ENCODE measurements at regions of chr3 and their contacts with region 1.

Region 1: DNA sequence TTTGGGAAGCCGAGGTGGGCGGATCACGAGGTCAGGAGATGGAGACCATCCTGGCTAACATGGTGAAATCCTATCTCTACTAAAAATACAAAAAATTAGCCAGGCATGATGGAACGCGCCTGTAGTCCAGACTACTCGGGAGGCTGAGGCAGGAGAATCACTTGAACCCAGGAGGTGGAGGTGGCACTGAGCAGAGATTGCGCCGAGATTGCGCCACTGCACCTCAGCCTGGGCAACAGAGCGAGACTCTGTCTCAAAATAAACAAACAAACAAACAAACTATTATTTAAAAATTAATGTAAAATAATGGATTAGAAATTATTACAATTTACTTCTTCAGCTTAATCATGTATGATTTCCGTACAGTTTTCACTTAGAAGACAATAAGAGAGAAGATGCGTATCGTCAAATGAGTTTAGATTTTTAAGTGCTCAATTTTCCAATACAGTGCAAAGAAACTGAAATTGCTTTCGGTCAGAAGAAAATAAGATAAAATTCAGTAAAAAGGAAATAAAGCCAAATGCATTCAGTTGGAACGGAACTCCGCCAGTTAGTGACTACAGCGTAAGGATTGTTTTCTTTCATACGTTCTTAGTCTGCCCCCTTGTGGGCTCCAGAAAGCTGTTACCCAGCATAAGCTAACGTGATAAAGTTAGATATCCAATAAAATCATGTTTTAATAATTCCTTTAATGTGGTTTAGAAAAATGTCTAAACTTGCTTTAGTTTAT is 24.8 kb downstream of the AADAC start:
- DNase-seq: peak; percentile 78
- H3K4me3 Mint-ChIP-seq: no peak overlapping the region
- H3K27ac Mint-ChIP-seq: no peak overlapping the region
- H3K4me1 Mint-ChIP-seq: peaks cover 26% of the 10 kb centered on the region
- H3K27me3 Mint-ChIP-seq: no peaks in the 10 kb centered on the region
- CTCF ChIP-seq: peak; percentile 73

Region 2: DNA sequence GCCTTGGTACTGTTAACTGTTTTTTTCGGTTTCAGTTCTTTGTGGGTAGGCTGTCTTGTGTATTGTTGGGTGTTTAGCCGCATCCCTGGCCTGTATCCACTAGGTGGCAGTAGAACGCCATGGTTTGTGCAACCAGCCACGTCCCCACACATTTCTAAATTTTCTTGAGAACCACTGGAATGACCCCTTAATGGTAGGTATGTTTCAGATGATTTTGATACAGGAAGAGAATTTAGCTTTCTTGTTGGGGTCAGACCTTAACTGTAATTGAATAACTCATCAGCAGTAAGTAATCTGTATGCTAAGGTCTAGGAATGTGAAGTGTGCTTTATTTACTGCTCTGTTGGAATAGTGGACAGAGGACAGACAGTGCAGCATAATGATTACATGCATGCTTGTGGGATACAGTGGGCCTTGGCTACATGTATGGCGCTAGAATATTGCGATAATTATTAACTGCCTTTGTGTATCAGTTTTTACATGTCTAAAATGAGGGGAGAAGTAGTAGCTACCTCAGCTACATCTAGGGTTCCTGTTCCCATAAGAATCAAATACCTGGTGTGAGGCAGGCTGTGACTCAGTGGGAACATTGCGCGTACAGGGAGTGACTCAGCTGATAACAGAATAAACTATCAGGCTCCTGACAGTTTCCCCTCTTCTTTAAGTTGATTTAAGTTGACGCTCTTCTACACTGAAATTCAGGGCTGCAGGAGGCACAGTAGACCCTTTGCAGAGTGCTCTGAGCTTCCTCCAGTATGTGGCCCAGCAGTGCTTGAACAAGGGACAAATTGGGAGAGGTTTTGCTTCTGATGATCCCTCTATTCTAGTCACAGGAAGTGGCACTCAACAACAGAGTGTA is 610.7 kb before region 1 on chr3:
- CTCF ChIA-PET with region 1: no interaction called
- intact Hi-C with region 1: loop called (anchors 5 kb)
- DNase-seq: peak; percentile 85
- H3K4me3 Mint-ChIP-seq: peak overlapping the region; percentile 31
- H3K27ac Mint-ChIP-seq: peak overlapping the region; percentile 7
- H3K4me1 Mint-ChIP-seq: peaks cover 23% of the 10 kb centered on the region
- H3K27me3 Mint-ChIP-seq: no peaks in the 10 kb centered on the region
- CTCF ChIP-seq: peak; percentile 94

Region 3: DNA sequence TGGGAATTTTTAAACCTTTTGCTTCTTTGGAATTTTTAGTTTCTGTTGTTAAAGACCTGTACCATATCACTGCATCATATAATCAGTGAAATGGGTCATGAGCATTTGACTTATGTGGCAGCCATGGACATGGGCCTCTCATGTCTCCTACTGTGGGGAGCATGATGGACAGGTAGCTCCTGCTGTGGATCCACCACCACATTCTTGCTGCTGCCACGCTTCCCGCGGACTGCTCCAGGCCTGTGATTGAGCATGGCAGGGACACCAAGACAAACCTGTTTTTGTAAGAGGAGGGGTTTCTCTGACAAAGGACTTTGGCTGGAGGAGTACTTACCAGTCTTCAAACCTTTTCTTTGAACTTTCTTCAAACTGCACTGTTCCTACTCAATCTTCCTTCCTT is 542.6 kb before region 1 on chr3:
- CTCF ChIA-PET with region 1: no interaction called
- intact Hi-C with region 1: loop called (anchors 2 kb)
- DNase-seq: no peak
- H3K4me3 Mint-ChIP-seq: no peak overlapping the region
- H3K27ac Mint-ChIP-seq: no peak overlapping the region
- H3K4me1 Mint-ChIP-seq: no peaks in the 10 kb centered on the region
- H3K27me3 Mint-ChIP-seq: no peaks in the 10 kb centered on the region
- CTCF ChIP-seq: no peak

Region 4: GRCh38 chr3:151379083-151379734 is 459.5 kb before region 1 on chr3:
- CTCF ChIA-PET with region 1: interaction called, 4 read pairs
- intact Hi-C with region 1: loop called (anchors 5 kb)
- DNase-seq: peak; percentile 63
- H3K4me3 Mint-ChIP-seq: no peak overlapping the region
- H3K27ac Mint-ChIP-seq: no peak overlapping the region
- H3K4me1 Mint-ChIP-seq: no peaks in the 10 kb centered on the region
- H3K27me3 Mint-ChIP-seq: no peaks in the 10 kb centered on the region
- CTCF ChIP-seq: peak; percentile 77

Region 5: GRCh38 chr3:151468284-151468917 is 370.3 kb before region 1 on chr3:
- CTCF ChIA-PET with region 1: interaction called, 15 read pairs
- intact Hi-C with region 1: loop called (anchors 1 kb)
- DNase-seq: peak; percentile 78
- H3K4me3 Mint-ChIP-seq: no peak overlapping the region
- H3K27ac Mint-ChIP-seq: no peak overlapping the region
- H3K4me1 Mint-ChIP-seq: no peaks in the 10 kb centered on the region
- H3K27me3 Mint-ChIP-seq: no peaks in the 10 kb centered on the region
- CTCF ChIP-seq: peak; percentile 93

Region 6: DNA sequence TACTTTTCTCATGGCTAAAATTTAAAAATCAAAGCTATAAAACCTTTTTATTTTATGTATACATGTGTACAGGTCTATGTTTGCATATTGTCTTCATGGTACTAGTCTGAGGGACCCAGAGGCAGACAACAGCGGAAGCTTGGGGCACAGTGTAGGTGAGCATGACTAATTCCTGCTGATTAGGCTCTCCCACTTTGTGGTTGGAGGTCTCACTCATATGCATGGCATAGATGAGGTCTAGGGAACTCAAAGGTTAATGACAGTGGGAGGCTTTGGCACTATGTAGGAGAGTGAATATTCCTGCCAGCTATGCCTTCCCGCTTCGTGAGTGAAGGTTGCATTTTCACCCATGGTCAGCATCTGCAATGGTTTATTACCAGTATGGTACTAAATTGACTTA is 152.5 kb before region 1 on chr3:
- CTCF ChIA-PET with region 1: no interaction called
- intact Hi-C with region 1: loop called (anchors 5 kb)
- DNase-seq: peak; percentile 42
- H3K4me3 Mint-ChIP-seq: no peak overlapping the region
- H3K27ac Mint-ChIP-seq: no peak overlapping the region
- H3K4me1 Mint-ChIP-seq: peaks cover 21% of the 10 kb centered on the region
- H3K27me3 Mint-ChIP-seq: no peaks in the 10 kb centered on the region
- CTCF ChIP-seq: no peak

Region 7: DNA sequence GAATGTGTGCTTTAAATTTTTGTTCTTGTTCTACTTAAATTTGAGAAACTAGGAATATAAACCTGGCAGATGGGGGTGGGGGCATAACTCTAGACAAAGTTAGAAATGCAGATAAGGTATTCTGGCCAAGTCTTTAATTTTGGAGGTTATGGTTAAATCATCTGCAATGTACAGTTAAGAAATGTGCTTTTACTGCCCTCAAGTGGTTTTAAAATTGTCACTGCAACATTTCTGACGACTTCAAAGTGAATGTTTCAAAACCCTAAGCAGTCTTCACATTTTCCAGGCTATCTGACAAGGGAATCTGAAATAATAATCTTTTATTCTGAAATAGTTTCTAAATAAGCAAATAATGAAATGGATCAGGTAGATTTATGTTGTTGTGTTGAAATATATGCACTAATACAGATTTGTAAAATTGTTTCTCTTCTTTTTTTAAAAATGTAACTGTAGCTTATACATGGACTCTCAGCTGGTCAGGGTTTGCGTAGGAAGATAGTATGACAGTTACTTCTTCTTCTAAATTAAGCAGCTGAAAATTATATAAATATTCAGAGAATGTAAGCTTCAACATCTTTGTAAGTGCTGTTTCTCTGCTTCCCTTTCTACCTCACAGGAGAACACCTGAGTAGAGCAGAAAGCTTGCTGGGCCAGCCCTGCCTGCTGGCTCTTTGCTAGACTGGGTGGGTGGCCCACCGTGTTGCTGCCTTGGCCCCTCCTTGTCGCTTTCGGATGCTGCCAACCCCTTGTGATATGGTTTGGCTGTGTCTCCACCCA is 79.7 kb after region 1 on chr3:
- CTCF ChIA-PET with region 1: interaction called, 9 read pairs
- intact Hi-C with region 1: loop called (anchors 1 kb)
- DNase-seq: no peak
- H3K4me3 Mint-ChIP-seq: no peak overlapping the region
- H3K27ac Mint-ChIP-seq: no peak overlapping the region
- H3K4me1 Mint-ChIP-seq: no peaks in the 10 kb centered on the region
- H3K27me3 Mint-ChIP-seq: no peaks in the 10 kb centered on the region
- CTCF ChIP-seq: peak; percentile 64